ENCODE measurements at regions of chrX and their contacts with region 1.

Region 1: DNA sequence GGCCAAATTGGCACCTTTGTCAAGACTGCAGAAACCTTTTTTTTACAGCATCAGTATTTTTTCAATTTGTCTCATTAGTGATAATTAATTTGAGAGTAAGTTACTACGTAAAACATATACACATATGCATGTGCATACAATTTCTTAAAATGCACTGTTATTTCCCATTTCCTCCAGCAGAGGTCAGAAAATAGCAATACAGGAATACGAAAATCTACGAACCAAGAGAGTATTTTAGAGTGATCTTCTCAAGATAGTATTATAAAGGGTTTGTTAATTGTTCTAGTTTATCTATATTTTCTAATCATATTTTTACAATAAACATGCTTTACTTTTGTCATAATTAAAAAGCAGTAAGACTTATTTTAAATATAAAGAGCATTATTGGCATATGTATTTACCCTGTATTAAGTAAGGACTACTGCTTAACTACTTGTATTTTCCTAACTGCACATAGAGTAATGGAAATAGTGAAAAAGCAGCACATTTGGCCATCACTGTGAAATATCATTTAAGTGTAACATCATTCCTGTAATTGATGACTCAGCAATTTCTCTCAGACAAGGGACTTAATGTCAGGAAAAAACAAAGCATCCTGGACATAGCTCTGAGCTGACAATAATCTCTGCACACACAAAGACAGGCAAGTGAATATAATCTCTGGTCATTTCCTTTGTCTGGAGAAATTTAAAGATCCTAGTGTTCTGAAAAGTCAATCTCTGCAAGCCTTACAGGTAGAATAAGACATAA is 45.6 kb downstream of the MAOB start:
- DNase-seq: peak; percentile 18
- ATAC-seq: peak; percentile 80
- H3K4me3 ChIP-seq: no peak overlapping the region
- H3K27ac ChIP-seq: no peak overlapping the region
- H3K4me1 ChIP-seq: no peaks in the 10 kb centered on the region
- H3K27me3 ChIP-seq: peaks cover 2% of the 10 kb centered on the region
- CTCF ChIP-seq: peak; percentile 59
- POLR2A ChIP-seq: no peak
- RAD21 ChIP-seq: peak; percentile 47

Region 2: DNA sequence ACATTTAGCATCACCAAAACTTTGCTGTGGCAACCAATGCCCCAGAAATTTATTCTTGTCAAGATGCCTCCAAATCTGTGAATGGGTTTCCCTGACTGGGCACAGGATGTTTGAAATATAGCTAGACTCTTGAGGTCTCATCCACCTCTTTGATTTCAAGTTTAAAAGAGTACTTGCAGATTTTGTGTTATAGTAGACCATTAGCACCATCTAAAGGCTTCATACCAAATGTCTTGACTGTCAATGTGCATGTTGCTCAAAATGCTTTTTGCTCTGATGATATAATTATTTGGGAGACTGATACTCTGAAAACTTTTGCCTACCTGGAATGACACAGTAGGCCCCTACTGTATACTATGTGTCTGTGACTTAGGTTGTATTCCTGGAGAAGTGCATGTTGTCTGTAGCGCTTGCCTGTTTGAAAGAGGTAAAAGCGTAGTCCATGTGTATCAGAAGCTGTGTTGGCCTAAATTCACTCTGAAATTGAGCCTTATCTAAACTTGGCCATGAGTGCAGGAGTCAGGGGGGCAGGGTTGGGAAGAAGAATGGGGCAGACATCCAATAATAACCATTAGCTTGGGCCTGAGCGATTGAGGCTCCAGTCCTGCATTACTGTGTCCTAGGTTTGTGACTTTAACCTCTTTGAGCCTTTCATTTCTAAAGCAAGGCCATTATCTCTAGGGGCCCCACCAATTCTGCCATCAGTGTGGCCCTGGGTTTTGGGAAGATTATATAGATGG is 102.7 kb after region 1 on chrX:
- CTCF ChIA-PET with region 1: no interaction called
- POLR2A ChIA-PET with region 1: no interaction called
- dilution Hi-C with region 1: no loop called
- in situ Hi-C with region 1: no loop called
- intact Hi-C with region 1: loop called (anchors 5 kb)
- DNase-seq: peak; percentile 3
- ATAC-seq: no peak
- H3K4me3 ChIP-seq: no peak overlapping the region
- H3K27ac ChIP-seq: no peak overlapping the region
- H3K4me1 ChIP-seq: no peaks in the 10 kb centered on the region
- H3K27me3 ChIP-seq: peaks cover 3% of the 10 kb centered on the region
- CTCF ChIP-seq: no peak
- POLR2A ChIP-seq: no peak
- RAD21 ChIP-seq: no peak

Region 3: DNA sequence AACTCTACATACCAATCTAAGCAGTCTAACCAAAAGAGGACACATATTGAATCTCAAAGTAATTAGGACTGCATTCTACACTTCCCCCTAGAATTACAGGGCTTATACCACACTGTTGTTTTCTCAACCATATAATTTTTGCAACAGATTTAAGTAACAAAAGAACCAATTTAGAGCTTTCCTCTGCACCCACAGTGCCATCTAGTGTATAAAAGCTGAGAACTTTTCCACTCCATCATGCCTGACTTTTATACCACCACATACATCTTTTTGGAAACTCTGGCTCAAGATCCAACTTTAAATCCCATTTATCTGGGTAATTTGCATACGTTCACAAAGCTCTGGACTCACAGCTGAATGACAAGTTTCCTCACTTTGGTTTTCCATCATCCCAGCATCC is 407.4 kb after region 1 on chrX:
- CTCF ChIA-PET with region 1: no interaction called
- POLR2A ChIA-PET with region 1: no interaction called
- dilution Hi-C with region 1: no loop called
- in situ Hi-C with region 1: no loop called
- intact Hi-C with region 1: loop called (anchors 2 kb)
- DNase-seq: peak; percentile 29
- ATAC-seq: peak; percentile 75
- H3K4me3 ChIP-seq: no peak overlapping the region
- H3K27ac ChIP-seq: no peak overlapping the region
- H3K4me1 ChIP-seq: no peaks in the 10 kb centered on the region
- H3K27me3 ChIP-seq: peaks cover 3% of the 10 kb centered on the region
- CTCF ChIP-seq: peak; percentile 51
- POLR2A ChIP-seq: no peak
- RAD21 ChIP-seq: peak; percentile 53

Region 4: GRCh38 chrX:45623266-45623665 is 1786.7 kb after region 1 on chrX:
- CTCF ChIA-PET with region 1: no interaction called
- POLR2A ChIA-PET with region 1: no interaction called
- dilution Hi-C with region 1: no loop called
- in situ Hi-C with region 1: no loop called
- intact Hi-C with region 1: no loop called
- DNase-seq: peak; percentile 91
- ATAC-seq: peak; percentile 75
- H3K4me3 ChIP-seq: no peak overlapping the region
- H3K27ac ChIP-seq: peak overlapping the region; percentile 89
- H3K4me1 ChIP-seq: peaks cover 5% of the 10 kb centered on the region
- H3K27me3 ChIP-seq: no peaks in the 10 kb centered on the region
- CTCF ChIP-seq: no peak
- POLR2A ChIP-seq: no peak
- RAD21 ChIP-seq: no peak

Measured in IMR-90 (cell line).